ENCODE measurements at regions of chr5 and their contacts with region 1.

Region 1: DNA sequence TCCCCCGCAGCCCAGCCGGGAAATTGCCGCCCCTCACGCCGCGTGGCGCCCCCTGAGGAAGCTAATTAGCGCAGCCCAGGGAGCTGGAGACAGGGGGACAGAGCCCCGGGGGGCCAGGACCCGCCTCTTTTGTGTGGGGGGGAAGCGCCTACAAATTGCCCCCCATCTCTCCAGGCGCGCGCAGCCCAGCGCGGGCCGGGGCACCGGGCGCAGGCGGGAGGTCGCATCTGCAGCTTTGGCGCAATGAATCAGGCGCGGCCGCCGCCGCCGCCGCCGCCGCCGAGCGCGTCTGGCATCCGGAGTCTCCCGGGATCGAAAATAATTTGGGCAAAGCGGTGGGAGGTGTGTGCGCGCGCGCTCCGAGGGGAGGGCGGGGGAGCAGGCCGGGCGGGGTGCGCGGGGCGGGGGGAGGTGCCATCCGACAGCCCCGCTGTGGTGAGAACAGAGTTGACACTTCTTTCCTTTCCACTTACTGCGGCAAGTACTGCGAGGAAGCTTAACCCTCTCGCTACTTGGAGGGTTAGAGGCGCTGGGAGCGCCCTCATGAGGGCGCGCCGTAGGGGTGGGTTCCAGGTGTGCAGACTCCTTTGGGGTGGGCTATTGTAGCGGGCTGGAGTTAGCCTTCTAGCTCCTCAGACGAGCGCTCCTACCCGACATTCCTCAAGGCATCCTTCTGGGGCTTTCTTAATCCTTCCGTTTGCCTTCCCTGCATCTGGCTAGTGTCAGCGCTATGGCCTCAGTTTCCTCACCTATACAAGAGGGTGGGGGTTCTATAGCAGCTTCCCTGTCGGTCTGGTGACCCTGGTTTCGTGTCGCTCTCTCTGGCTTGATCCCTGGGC is 63.1 kb downstream of the CXXC5 start:
- DNase-seq: peak in 8 of 10 donors; percentile 42 to 77 (median 70)
- H3K4me3 ChIP-seq: peak overlapping the region; percentile 37 to 82 (median 66)
- H3K27ac ChIP-seq: peak overlapping the region; percentile 76 to 98 (median 95)
- H3K27me3 ChIP-seq: no peaks in the 10 kb centered on the region
- CTCF ChIP-seq: peak in 27 of 56 donors; percentile 0 to 38 (median 17)

Region 2: GRCh38 chr5:139593716-139594319 is 117.5 kb before region 1 on chr5:
- intact Hi-C with region 1: no loop called
- DNase-seq: no peak
- H3K4me3 ChIP-seq: no peak overlapping the region
- H3K27ac ChIP-seq: no peak overlapping the region
- H3K27me3 ChIP-seq: no peaks in the 10 kb centered on the region
- CTCF ChIP-seq: no peak

Region 3: GRCh38 chr5:139745800-139746690 is 34.8 kb after region 1 on chr5:
- intact Hi-C with region 1: loop called in 1 of 2 experiments (anchors 2 kb)
- DNase-seq: peak in 9 of 10 donors; percentile 58 to 89 (median 77)
- H3K4me3 ChIP-seq: peak overlapping the region; percentile 37 to 75 (median 62)
- H3K27ac ChIP-seq: peak overlapping the region; percentile 59 to 100 (median 96)
- H3K27me3 ChIP-seq: no peaks in the 10 kb centered on the region
- CTCF ChIP-seq: no peak

Region 4: GRCh38 chr5:139755892-139756671 is 44.8 kb after region 1 on chr5:
- intact Hi-C with region 1: loop called in 1 of 2 experiments (anchors 5 kb)
- DNase-seq: peak in 1 of 10 donors; percentile 56
- H3K4me3 ChIP-seq: peak overlapping the region; percentile 1 to 73 (median 50)
- H3K27ac ChIP-seq: peak overlapping the region in 57 of 59 donors; percentile 6 to 94 (median 77)
- H3K27me3 ChIP-seq: no peaks in the 10 kb centered on the region
- CTCF ChIP-seq: no peak

Region 5: GRCh38 chr5:139765409-139766217 is 54.3 kb after region 1 on chr5:
- intact Hi-C with region 1: loop called in 1 of 2 experiments (anchors 2 kb)
- DNase-seq: peak in 9 of 10 donors; percentile 68 to 83 (median 78)
- H3K4me3 ChIP-seq: peak overlapping the region; percentile 43 to 84 (median 63)
- H3K27ac ChIP-seq: peak overlapping the region; percentile 66 to 96 (median 92)
- H3K27me3 ChIP-seq: no peaks in the 10 kb centered on the region
- CTCF ChIP-seq: peak; percentile 85 to 100 (median 99)

Region 6: DNA sequence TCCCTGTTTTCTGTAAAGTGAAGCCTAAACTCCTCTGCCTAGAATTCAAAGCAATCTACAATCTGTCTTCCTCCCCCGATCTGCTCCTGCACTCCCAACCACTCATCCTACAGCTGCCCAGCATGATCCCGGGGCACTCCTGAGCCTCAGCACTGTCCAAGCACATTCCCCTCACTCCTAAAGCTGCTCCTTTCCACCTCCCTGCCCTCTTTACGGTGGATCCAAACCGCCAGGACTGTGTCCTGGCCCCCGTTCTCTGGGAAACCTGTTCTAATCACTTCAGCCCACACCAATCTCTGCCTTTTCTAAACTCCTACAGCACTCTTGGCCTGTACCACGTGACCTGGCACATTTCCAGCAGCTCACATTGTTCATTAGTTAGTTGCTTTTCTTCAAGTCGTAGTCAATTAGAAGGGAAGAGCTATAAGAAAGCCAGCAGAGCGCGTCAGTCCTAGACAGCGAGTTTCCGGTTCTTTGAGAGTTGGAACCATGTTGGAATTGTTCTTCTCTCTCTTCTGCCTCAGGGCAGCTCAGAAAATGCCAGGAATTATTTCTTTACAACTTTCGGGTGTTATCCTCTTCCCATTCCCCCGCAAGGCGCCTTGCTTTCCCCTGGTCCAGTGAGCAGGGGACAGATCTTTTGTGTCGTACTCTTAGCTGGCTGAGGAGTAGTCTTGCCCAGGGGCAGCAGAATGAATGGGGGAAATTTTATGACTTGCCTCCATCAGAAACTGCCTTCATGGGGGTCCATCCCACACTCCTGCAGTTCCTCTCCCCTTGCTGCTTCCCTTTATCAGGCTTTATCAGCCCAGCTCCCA is 271.1 kb after region 1 on chr5:
- intact Hi-C with region 1: no loop called
- DNase-seq: peak in 4 of 10 donors; percentile 28 to 66 (median 47)
- H3K4me3 ChIP-seq: no peak overlapping the region
- H3K27ac ChIP-seq: peak overlapping the region in 4 of 59 donors; percentile 2 to 44 (median 15)
- H3K27me3 ChIP-seq: no peaks in the 10 kb centered on the region
- CTCF ChIP-seq: no peak

Region 7: DNA sequence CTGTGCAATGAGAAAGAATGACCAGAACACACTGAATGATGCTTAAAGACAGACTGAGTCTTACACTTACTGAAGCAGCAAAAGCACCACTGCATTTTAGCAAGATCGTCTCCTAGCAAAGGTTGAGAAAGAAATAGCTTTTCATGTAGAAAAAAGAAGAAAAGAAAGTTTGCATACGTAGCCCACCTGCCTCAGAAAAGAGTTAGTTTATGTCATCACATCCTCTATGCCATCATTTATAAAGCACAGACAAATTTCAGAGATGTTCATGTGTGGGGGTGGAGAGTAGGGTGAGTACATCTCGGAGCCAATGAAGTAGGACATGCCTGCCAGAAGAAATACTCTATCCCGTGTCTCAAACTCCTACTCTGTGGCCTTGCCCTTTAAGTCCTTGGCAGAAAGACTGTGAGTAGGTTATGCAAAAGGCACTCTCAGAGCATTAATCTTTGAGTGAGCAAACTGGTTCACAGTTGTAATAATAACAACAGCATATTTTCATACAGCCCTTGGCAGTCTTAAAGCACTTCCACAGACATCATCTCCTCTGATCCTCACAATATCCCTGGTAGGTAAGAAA is 309.4 kb after region 1 on chr5:
- intact Hi-C with region 1: no loop called
- DNase-seq: no peak
- H3K4me3 ChIP-seq: no peak overlapping the region
- H3K27ac ChIP-seq: no peak overlapping the region
- H3K27me3 ChIP-seq: no peaks in the 10 kb centered on the region
- CTCF ChIP-seq: no peak

Measured in dorsolateral prefrontal cortex (tissue), 120 donors.